Ascending aorta (tissue), 2 donors: ENCODE measurements at regions of chr16 and their contacts with region 1.

Region 1: GRCh38 chr16:23556881-23557778 is at the starts of genes EARS2 and UBFD1:
- DNase-seq: peak; percentile 95 to 99
- H3K4me3 ChIP-seq: peak within 1 kb of the TSS; percentile 88 to 94
- H3K27ac ChIP-seq: peak within 1 kb of the TSS; percentile 87 to 97
- H3K4me1 ChIP-seq: peaks cover 8 to 20% of the 10 kb centered on the region in 2 donors
- H3K27me3 ChIP-seq: no peaks in the 10 kb centered on the region
- CTCF ChIP-seq: peak; percentile 86 to 91 (median 88)
- total RNA-seq, gene EARS2: 16.8 TPM
- total RNA-seq, gene UBFD1: 51.8 TPM

Region 2: DNA sequence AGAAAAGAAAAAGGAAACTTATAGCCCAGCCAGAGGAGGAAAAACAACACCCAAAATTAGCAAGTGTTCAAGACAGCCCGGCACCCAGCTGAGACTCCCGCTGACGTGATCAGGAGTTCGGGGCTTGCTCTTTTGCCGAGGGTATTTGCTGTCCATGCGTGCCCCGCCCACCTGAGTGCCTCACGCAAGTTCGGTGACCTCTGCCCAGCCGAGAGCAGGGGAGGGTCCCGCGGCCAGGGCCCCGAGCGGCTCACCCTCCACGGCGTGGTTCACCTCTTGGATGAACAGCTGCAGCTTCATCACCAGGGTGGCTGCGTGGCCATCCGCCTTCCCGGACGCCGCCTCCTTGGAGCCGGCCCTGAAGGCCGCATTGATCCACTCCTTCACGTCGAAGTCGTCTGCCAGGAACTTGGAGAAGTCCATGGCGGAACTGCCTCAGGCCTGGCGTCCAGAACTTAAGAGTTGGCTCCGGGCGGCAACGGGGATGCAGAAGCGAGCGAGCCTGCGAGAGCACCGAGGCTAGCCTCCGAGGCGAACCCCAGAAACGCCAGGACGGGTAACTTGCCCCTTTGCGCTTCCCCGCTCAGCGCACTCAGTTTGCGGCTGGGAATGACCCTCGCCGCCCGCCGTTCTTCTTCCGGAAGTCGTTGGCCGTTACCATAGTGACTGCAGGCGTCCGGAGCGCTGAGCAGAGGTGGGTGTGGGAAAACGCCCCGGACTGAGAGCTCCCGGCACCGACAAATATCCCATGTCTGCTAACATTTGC is 104.4 kb before region 1 on chr16 and contains the start of gene COG7:
- intact Hi-C with region 1: loop called (anchors 1 kb)
- DNase-seq: peak; percentile 39 to 89
- H3K4me3 ChIP-seq: peak within 1 kb of the TSS; percentile 89 to 94
- H3K27ac ChIP-seq: peak within 1 kb of the TSS; percentile 61 to 72
- H3K4me1 ChIP-seq: peaks cover 6 to 14% of the 10 kb centered on the region in 2 donors
- H3K27me3 ChIP-seq: no peaks in the 10 kb centered on the region
- CTCF ChIP-seq: no peak
- total RNA-seq, gene COG7: 25.9 TPM

Region 3: DNA sequence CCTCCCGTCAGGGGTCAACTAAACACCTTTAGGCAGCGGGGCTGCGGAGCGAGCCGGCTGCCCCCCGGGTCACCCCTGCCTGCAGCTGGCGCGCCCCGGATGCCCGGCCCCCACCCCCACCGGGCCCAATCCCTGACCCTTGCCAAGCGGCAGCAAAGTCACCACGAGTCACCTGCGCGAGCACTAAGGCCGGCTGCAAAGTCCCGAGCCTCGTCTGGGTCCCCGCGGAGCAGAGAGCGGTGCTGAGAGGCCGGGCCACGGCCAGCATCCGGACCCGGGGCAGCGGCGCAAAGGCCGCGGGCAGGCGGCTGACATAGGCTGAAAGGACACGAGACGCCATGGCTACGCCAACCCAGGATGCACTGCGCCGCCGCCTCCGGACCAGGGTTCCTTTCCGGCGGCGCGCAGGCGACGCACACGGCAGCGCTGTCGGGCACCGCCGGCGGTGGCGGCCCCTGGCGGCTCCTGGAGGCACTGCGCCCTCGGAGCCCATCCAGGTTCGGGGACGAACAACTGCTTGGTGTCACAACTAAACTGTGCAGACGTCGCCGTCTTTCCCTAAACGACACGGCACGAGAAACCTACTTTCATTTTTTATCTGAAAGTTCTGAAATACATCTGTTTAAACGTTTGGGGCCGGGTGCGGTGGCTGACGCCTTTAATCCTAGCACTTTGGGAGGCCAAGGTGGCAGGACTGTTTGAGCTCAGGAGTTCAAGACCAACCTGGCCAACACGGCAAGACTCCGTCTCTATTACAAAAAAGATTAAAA is 39.0 kb after region 1 on chr16 and contains the start of gene NDUFAB1:
- intact Hi-C with region 1: loop called (anchors 1 kb)
- DNase-seq: peak; percentile 38 to 94
- H3K4me3 ChIP-seq: peak within 1 kb of the TSS; percentile 95 to 97
- H3K27ac ChIP-seq: peak within 1 kb of the TSS; percentile 85 to 87
- H3K4me1 ChIP-seq: peaks cover 7 to 14% of the 10 kb centered on the region in 2 donors
- H3K27me3 ChIP-seq: no peaks in the 10 kb centered on the region
- CTCF ChIP-seq: peak; percentile 97 to 100 (median 99)
- total RNA-seq, gene NDUFAB1: 71.4 TPM

Region 4: DNA sequence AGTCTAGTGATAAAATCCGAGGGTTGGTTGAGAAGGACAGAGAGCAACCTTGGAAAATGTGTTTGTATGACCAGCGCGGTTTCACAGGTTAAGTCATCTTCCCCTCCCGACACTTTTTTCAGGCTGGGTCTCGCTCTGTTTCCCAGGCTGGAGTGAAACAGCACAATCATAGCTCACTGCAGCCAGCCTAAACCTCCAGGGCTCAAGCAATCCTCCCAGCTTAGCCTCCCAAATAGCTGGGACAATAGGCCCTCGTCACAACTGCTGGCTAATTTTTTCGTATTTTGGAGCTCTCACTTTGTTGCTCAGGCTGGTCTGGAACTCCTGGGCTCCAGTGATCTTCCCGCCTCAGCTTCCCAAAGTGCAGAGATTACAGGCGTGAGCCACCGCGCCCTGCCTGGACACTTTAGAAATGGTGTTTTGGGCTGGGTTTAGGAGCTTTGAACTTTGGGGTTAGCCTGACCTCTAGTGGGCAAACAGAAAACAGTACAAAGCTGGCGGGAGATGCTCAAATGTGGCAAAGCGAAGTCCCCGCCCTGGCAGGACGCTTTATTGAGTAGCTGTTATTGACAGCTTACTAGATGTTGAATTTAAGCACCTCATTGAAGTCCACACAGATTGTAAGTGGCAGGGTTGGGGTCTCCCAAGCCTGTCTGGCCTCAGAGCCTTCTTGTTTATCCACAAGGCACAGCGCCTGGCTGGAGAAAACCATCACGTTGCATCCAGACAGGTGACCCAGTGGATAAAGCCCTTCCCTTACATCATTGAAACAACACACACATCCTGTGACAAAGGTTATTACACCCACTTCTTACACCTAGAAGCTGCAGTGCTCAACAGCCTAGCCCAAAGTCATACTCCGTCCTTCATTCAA is 947.6 kb after region 1 on chr16:
- intact Hi-C with region 1: loop called (anchors 10 kb)
- DNase-seq: peak in 1 of 2 donors; percentile 72
- H3K4me3 ChIP-seq: no peak overlapping the region
- H3K27ac ChIP-seq: no peak overlapping the region
- H3K4me1 ChIP-seq: peaks cover 0 to 2% of the 10 kb centered on the region in 2 donors
- H3K27me3 ChIP-seq: no peaks in the 10 kb centered on the region
- CTCF ChIP-seq: peak; percentile 55 to 74 (median 65)